Activated CD4-positive, alpha-beta T cell treated with anti-CD3 and anti-CD28 coated beads for 36 hours (primary cell): ENCODE measurements at regions of chr2 and their contacts with region 1.

Region 1: GRCh38 chr2:200431996-200432705 is 77.7 kb downstream of the KCTD18 start:
- DNase-seq: no peak
- ATAC-seq: no peak
- H3K4me3 Mint-ChIP-seq: no peak overlapping the region
- H3K27ac Mint-ChIP-seq: no peak overlapping the region
- H3K4me1 Mint-ChIP-seq: peaks cover 5% of the 10 kb centered on the region
- H3K27me3 Mint-ChIP-seq: no peaks in the 10 kb centered on the region

Region 2: DNA sequence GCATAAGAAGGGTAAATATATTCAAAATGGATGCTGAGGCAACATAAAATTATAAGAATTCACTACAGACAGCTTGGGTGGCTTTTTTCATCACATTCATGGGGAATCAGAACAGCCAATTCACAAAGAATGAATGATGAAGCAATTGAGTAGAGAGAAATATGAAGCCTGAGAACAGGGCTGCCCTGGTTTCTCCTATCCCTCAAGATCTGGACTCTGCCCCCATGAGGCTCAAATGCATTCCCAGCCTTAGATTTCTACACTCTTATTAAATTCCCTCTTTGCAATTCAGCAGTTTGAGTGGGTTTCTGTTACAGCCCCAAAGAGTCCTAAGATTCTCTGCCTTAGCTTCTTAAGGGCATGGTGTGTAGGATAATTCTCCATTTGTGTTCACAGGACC is 304.3 kb before region 1 on chr2:
- CTCF ChIA-PET with region 1: no interaction called
- POLR2A ChIA-PET with region 1: no interaction called
- intact Hi-C with region 1: no loop called
- DNase-seq: no peak
- ATAC-seq: no peak
- H3K4me3 Mint-ChIP-seq: no peak overlapping the region
- H3K27ac Mint-ChIP-seq: no peak overlapping the region
- H3K4me1 Mint-ChIP-seq: no peaks in the 10 kb centered on the region
- H3K27me3 Mint-ChIP-seq: peaks cover 3% of the 10 kb centered on the region

Region 3: GRCh38 chr2:200411831-200412230 is 20.3 kb before region 1 on chr2:
- CTCF ChIA-PET with region 1: no interaction called
- POLR2A ChIA-PET with region 1: no interaction called
- intact Hi-C with region 1: loop called in 1 of 2 experiments (anchors 2 kb)
- DNase-seq: no peak
- ATAC-seq: no peak
- H3K4me3 Mint-ChIP-seq: no peak overlapping the region
- H3K27ac Mint-ChIP-seq: no peak overlapping the region
- H3K4me1 Mint-ChIP-seq: peaks cover 12% of the 10 kb centered on the region
- H3K27me3 Mint-ChIP-seq: no peaks in the 10 kb centered on the region